AG04449 (cell line): ENCODE measurements at regions of chr1 and their contacts with region 1.

Region 1: DNA sequence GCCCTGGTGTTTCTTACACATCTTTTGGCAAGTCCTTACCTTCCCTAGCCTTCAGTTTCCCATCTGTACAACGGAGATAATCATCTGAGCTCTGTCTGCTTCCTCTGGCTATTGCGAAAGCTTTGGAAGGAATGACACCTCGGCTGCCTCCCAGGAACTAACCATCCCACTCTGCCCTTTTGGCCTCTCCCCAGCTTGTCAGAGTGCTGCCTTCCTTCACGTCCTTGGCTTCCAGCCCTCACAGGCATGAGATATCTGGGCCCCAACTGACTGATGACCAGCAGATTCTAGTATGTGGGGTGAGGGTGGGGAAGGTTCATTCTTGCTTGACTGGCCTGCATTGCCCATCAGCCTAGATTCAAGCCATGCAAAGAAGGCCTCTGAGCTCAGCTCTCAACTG is 253.1 kb upstream of the FGGY start:
- DNase-seq: peak; percentile 92
- H3K4me3 ChIP-seq: no peak overlapping the region
- CTCF ChIP-seq: no peak

Region 2: DNA sequence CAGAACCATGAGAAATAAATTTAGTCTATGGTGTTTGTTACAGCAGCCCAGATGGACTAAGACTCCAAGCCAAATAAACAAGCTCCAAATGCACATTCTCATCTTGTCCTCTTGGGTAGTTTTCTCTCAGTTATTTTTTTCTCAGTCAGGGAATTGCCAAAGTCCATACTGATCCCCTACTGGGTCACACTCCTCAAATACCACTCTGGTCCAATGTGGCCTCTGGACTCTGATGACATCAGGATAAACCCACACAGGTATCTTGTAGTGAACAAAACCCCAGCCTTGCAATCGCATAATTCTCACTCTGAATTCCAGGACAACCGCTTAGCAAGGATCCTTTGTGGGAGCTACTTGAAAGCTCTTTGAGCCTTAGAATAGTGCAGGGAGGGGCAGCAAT is 11.6 kb before region 1 on chr1:
- CTCF ChIA-PET with region 1: interaction called, 10 read pairs
- POLR2A ChIA-PET with region 1: interaction called, 8 read pairs
- DNase-seq: no peak
- H3K4me3 ChIP-seq: no peak overlapping the region
- CTCF ChIP-seq: no peak